ENCODE measurements at regions of chr19 and their contacts with region 1.

Region 1: DNA sequence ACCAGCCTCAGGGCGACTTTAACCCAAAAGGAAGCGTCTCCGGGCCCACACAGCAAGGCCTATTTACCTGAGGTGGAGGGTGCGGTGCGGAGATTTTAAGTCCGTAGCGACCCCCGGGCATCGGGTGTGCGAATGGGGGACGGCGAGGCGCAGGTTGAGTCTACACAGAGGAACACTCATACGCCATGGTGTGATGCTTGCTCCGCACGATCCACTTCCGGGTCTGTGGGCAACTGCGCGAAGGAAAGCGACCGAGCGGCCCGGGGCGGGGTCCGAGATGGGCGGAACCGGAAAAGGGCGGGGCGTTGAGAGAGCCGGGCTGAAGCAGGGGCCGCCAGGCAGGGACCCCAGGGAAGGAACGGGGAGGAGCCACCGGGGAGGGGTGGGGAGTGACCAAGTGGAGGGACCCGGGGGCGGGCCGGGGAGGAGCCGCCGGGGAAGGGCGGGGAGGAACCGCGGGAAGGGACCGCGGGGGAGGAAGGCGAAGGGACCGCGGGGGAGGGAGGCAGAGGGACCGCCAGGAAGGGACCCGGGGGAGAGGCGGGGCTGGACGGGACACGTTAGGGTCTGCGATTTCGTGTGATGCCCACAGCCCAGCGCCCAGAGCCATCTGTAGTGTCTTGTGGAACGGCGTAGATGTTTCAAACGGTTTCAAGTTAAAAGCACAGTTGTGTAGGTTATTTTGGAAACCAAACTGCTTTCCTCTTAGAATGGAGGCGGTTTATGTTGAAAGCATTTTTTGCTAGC is at the start of gene ZNF160:
- DNase-seq: peak; percentile 100
- ATAC-seq: peak; percentile 96
- H3K4me3 Mint-ChIP-seq: peak within 1 kb of the TSS; percentile 87
- H3K27ac Mint-ChIP-seq: peak within 1 kb of the TSS; percentile 91
- H3K4me1 Mint-ChIP-seq: peaks cover 18% of the 10 kb centered on the region
- H3K27me3 Mint-ChIP-seq: no peaks in the 10 kb centered on the region
- total RNA-seq, gene ZNF160: 42.2 to 53.0 TPM

Region 2: DNA sequence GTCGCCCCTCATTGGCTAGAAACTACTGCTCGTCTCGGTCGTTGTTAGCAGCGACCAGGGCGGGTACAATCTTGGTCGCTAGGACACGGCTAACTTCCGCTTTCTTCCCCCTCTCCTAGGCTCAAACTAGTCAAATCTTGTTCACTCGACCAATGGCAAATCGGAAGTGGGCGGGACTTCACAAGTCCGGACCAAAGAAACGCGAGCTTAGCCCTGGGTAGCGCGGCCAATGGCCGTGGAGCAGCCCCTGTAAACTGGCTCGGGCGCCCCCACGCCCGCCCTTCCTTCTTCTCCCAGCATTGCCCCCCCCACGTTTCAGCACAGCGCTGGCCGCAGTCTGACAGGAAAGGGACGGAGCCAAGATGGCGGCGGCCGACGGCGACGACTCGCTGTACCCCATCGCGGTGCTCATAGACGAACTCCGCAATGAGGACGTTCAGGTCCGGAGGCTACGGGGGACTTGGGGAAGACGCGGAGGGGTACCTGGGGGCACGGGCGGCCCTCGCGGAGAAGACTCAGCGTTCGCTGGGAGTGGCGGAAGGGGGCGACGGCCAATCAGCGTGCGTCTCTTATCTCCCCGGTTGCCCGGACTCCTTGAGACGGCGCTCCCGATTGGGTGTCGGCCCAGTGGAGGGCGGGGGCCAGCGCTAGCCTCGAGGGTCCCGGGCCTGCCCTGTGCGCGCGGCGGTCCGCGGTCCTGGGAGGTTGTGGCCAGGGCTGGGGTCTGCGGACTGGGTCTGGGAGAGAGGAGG is 913.5 kb before region 1 on chr19 and contains the start of gene PPP2R1A:
- CTCF ChIA-PET with region 1: no interaction called
- POLR2A ChIA-PET with region 1: no interaction called
- intact Hi-C with region 1: loop called in 1 of 2 experiments (anchors 1 kb)
- DNase-seq: peak; percentile 99
- ATAC-seq: peak; percentile 93
- H3K4me3 Mint-ChIP-seq: peak within 1 kb of the TSS; percentile 91
- H3K27ac Mint-ChIP-seq: peak within 1 kb of the TSS; percentile 97
- H3K4me1 Mint-ChIP-seq: peaks cover 41% of the 10 kb centered on the region
- H3K27me3 Mint-ChIP-seq: no peaks in the 10 kb centered on the region
- total RNA-seq, gene PPP2R1A: 215 to 231 TPM

Region 3: GRCh38 chr19:52853880-52854279 is 249.5 kb before region 1 on chr19:
- CTCF ChIA-PET with region 1: no interaction called
- POLR2A ChIA-PET with region 1: no interaction called
- intact Hi-C with region 1: loop called in 1 of 2 experiments (anchors 1 kb)
- DNase-seq: no peak
- ATAC-seq: no peak
- H3K4me3 Mint-ChIP-seq: no peak overlapping the region
- H3K27ac Mint-ChIP-seq: no peak overlapping the region
- H3K4me1 Mint-ChIP-seq: peaks cover 23% of the 10 kb centered on the region
- H3K27me3 Mint-ChIP-seq: no peaks in the 10 kb centered on the region

Region 4: GRCh38 chr19:52993323-52994178 is 109.8 kb before region 1 on chr19:
- CTCF ChIA-PET with region 1: no interaction called
- POLR2A ChIA-PET with region 1: no interaction called
- intact Hi-C with region 1: loop called in 1 of 2 experiments (anchors 1 kb)
- DNase-seq: peak; percentile 88
- ATAC-seq: peak; percentile 88
- H3K4me3 Mint-ChIP-seq: peak overlapping the region; percentile 72
- H3K27ac Mint-ChIP-seq: no peak overlapping the region
- H3K4me1 Mint-ChIP-seq: peaks cover 15% of the 10 kb centered on the region
- H3K27me3 Mint-ChIP-seq: peaks cover 9% of the 10 kb centered on the region

Region 5: GRCh38 chr19:53076977-53077376 is 26.4 kb before region 1 on chr19:
- CTCF ChIA-PET with region 1: no interaction called
- POLR2A ChIA-PET with region 1: no interaction called
- intact Hi-C with region 1: no loop called
- DNase-seq: peak; percentile 49
- ATAC-seq: no peak
- H3K4me3 Mint-ChIP-seq: no peak overlapping the region
- H3K27ac Mint-ChIP-seq: no peak overlapping the region
- H3K4me1 Mint-ChIP-seq: no peaks in the 10 kb centered on the region
- H3K27me3 Mint-ChIP-seq: no peaks in the 10 kb centered on the region

Region 6: DNA sequence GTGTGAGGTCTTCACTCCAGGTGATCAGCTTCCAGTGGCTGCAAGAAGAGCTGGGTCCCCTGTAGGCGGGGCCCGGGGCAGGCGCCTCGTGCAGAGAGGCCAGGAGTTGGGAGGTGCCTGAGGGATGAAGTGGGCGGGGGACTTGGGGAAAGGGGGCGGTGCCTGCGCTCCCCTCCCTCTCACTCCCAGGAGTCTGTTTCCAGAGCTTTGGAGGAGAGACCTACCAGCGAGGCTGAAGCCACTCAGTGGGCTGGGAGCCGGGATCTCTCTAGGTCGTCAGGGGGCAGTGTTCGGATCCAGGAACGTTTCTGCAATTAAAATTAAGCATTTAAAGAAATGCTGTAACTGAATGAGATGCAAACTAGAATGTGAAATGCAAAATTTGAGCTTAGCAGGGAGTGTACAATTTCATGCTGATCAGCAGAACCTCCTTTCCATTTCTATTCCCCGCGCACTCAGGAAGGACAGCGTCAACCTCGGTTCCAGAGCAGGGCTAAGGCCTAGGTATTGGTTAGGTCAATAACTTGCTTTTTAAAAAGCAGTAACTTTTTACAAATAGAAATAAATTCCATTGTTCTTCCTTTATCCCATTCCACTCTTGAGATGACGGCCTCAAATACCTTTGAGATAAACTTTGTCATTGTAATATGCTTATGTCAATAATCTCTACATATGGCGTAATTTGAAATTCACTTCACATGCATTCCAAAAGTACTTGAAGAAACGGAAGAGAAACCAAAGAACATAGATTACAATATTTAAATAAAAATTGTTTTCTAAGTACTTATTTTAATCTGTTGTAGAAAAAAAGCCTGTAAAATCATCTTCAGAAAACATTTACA is 11.7 kb before region 1 on chr19:
- CTCF ChIA-PET with region 1: no interaction called
- POLR2A ChIA-PET with region 1: no interaction called
- intact Hi-C with region 1: no loop called
- DNase-seq: no peak
- ATAC-seq: no peak
- H3K4me3 Mint-ChIP-seq: no peak overlapping the region
- H3K27ac Mint-ChIP-seq: no peak overlapping the region
- H3K4me1 Mint-ChIP-seq: no peaks in the 10 kb centered on the region
- H3K27me3 Mint-ChIP-seq: no peaks in the 10 kb centered on the region

Region 7: DNA sequence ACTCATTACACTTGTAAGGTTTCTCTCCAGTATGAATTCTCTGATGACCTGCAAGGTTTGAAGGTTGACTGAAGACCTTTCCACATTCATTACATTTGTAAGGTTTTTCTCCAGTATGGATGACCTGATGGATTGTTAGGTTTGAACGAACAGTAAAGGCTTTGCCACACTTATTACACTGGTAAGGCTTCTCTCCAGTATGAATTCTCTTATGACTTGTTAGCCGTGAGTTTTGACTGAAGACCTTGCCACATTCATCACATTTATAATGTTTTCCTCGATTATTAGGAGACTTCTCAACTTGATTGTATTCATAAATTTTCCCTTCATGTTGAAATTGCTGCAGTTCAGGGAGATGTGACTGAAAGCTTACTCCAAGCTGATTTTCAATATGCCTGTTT is 62.3 kb after region 1 on chr19:
- CTCF ChIA-PET with region 1: no interaction called
- POLR2A ChIA-PET with region 1: no interaction called
- intact Hi-C with region 1: no loop called
- DNase-seq: no peak
- ATAC-seq: no peak
- H3K4me3 Mint-ChIP-seq: no peak overlapping the region
- H3K27ac Mint-ChIP-seq: no peak overlapping the region
- H3K4me1 Mint-ChIP-seq: no peaks in the 10 kb centered on the region
- H3K27me3 Mint-ChIP-seq: no peaks in the 10 kb centered on the region

Region 8: DNA sequence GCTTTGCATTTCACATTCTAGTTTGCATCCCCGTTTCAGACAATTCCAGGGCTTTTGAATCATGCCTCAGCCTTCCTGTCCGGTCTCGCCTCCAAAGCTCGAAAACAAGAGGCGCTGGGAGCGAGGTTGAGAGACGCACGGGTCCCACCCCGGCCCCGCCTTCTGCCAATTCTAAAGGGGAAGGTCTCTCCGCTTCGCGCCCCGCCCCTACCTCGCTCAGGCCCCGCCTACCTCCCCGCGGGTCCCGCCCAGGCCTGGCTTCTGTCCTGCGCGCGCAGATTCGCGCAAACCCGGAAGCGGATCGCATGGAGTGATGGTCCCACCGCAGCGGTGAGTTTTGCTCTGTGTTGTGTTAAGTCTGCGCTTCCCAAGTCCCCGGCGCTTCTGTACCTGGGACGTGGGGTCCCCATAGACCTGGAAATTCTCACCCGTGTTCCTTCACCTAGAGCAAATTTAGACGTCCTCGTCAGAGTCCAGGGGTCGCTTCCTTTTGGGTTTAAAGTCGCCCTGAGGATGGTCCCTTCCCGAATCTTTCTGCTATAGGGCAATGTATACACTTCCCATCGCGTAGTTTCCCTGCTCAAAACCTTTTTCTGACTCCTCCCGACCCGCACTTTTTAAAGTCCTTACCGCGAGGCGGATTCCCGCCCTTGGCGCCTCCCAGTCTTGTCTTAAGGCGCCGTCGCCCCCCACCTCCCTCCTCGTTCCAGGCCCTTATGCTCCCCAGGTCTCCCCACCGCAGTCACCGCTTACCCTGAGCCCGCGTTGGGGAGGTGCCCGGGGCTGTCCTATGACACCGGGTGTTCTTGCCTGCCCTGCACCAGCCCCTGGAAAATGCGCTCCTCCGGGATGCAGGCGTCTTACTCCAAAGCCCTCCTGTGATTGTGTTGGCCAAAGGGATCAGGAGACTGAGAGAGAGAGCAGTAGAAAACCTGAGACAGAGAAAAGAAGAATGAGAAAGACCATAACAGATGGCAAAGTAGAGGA is 230.4 kb after region 1 on chr19 and contains the start of gene ZNF845:
- CTCF ChIA-PET with region 1: no interaction called
- POLR2A ChIA-PET with region 1: no interaction called
- intact Hi-C with region 1: loop called in 1 of 2 experiments (anchors 1 kb)
- DNase-seq: peak; percentile 97
- ATAC-seq: peak; percentile 99
- H3K4me3 Mint-ChIP-seq: peak within 1 kb of the TSS; percentile 88
- H3K27ac Mint-ChIP-seq: peak within 1 kb of the TSS; percentile 92
- H3K4me1 Mint-ChIP-seq: peaks cover 10% of the 10 kb centered on the region
- H3K27me3 Mint-ChIP-seq: peaks cover 5% of the 10 kb centered on the region
- total RNA-seq, gene ZNF845: 5.9 to 6.3 TPM

Region 9: DNA sequence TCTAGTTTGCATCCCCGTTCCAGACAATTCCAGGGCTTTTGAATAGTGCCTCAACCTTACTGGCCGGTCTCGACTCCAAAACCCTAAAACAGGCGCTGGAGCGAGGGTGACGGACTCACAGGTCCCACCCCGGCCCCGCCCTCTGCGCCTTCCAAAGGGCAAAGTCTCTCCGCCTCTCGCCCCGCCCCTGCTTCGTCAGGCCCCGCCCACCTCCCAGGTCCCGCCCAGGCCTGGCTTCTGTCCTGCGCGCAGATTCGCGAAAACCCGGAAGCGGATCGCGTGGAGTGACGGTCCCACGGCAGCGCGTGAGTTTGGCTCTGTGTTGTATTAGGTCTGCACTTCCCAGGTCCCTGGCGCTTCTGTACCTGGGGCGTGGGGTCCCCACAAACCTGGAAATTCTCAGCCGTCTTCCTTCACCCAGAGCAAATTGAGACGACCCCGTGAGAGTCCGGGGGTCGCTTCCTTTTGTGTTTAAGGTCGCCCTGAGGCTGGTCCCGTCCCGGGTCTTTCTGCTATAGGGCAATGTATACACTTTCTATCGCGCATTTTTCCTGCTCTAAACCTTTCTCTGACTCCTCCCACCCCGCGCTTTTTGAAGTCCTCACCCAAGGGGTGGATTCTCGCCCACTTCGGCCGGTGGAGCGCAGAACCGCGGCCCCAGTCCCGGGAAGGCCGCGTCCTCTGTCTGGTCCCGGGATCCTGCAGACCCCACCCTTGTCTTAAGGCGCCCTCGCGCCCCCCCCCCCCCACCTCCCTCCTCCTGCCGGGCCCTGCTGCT is 364.3 kb after region 1 on chr19 and contains the start of gene ZNF813:
- CTCF ChIA-PET with region 1: no interaction called
- POLR2A ChIA-PET with region 1: no interaction called
- intact Hi-C with region 1: loop called in 1 of 2 experiments (anchors 1 kb)
- DNase-seq: peak; percentile 98
- ATAC-seq: peak; percentile 98
- H3K4me3 Mint-ChIP-seq: peak within 1 kb of the TSS; percentile 80
- H3K27ac Mint-ChIP-seq: peak within 1 kb of the TSS; percentile 87
- H3K4me1 Mint-ChIP-seq: peaks cover 20% of the 10 kb centered on the region
- H3K27me3 Mint-ChIP-seq: peaks cover 9% of the 10 kb centered on the region
- total RNA-seq, gene ZNF813: 5.8 to 7.4 TPM